HEK293 (cell line): ENCODE measurements at regions of chr6 and their contacts with region 1.

Region 1: GRCh38 chr6:110389689-110390382 is 25.5 kb downstream of the DDO start:
- H3K4me3 ChIP-seq: no peak overlapping the region
- H3K27ac ChIP-seq: no peak overlapping the region
- H3K4me1 ChIP-seq: peaks cover 10% of the 10 kb centered on the region
- CTCF ChIP-seq: no peak

Region 2: GRCh38 chr6:109526905-109527628 is 862.8 kb before region 1 on chr6:
- CTCF ChIA-PET with region 1: interaction called, 31 read pairs
- POLR2A ChIA-PET with region 1: no interaction called
- H3K4me3 ChIP-seq: no peak overlapping the region
- H3K27ac ChIP-seq: no peak overlapping the region
- H3K4me1 ChIP-seq: no peaks in the 10 kb centered on the region
- CTCF ChIP-seq: peak; percentile 53; the same call in 1 of the 2 replicates

Region 3: GRCh38 chr6:110053395-110054240 is 336.2 kb before region 1 on chr6:
- CTCF ChIA-PET with region 1: interaction called, 11 read pairs
- POLR2A ChIA-PET with region 1: no interaction called
- H3K4me3 ChIP-seq: no peak overlapping the region
- H3K27ac ChIP-seq: no peak overlapping the region
- H3K4me1 ChIP-seq: no peaks in the 10 kb centered on the region
- CTCF ChIP-seq: peak; percentile 43

Region 4: GRCh38 chr6:110317189-110317588 is 72.6 kb before region 1 on chr6:
- CTCF ChIA-PET with region 1: interaction called, 12 read pairs
- POLR2A ChIA-PET with region 1: no interaction called
- H3K4me3 ChIP-seq: no peak overlapping the region
- H3K27ac ChIP-seq: no peak overlapping the region
- H3K4me1 ChIP-seq: peaks cover 3% of the 10 kb centered on the region; the same call in 1 of the 2 replicates
- CTCF ChIP-seq: no peak

Region 5: DNA sequence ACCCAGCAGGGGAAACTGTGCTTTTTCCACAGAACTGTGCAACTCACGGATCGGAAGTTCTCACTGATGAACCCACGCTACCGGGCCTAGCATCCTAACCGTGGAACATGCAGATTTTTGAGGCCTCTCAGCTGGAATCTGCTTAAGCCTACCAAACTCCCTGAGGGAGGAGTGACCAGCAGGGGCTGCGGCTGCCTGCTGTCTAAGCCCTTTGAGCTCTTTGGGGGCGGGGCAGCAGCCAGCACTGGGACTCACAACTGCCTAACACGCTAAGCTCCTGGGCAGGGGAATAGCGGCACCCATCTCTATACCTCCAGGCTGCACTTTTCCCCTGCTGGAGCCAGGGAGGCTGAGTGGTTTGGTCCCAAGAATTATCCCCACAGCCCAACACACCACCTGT is 11.3 kb before region 1 on chr6:
- CTCF ChIA-PET with region 1: interaction called, 12 read pairs
- POLR2A ChIA-PET with region 1: no interaction called
- H3K4me3 ChIP-seq: no peak overlapping the region
- H3K27ac ChIP-seq: no peak overlapping the region
- H3K4me1 ChIP-seq: no peaks in the 10 kb centered on the region
- CTCF ChIP-seq: no peak